AG04450 (cell line): ENCODE measurements at regions of chr22 and their contacts with region 1.

Region 1: GRCh38 chr22:39851606-39852315 is 41.8 kb downstream of the ENTHD1 start:
- DNase-seq: no peak
- H3K4me3 ChIP-seq: no peak overlapping the region
- H3K27ac ChIP-seq: no peak overlapping the region
- H3K27me3 ChIP-seq: peaks cover 8% of the 10 kb centered on the region
- CTCF ChIP-seq: no peak

Region 2: GRCh38 chr22:38569972-38570778 is 1281.6 kb before region 1 on chr22 and contains the start of gene DMC1:
- CTCF ChIA-PET with region 1: interaction called, 10 read pairs
- POLR2A ChIA-PET with region 1: no interaction called
- DNase-seq: no peak
- H3K4me3 ChIP-seq: peak within 1 kb of the TSS; percentile 76
- H3K27ac ChIP-seq: peak within 1 kb of the TSS; percentile 13
- H3K27me3 ChIP-seq: peaks cover 2% of the 10 kb centered on the region
- CTCF ChIP-seq: no peak
- polyA plus RNA-seq, gene DMC1: 0.29 and 0.89 TPM in 2 replicates